ENCODE measurements at regions of chr12 and their contacts with region 1.

Region 1: GRCh38 chr12:121399391-121400331 is at the start of gene RNF34:
- DNase-seq: peak; percentile 99
- H3K4me3 ChIP-seq: peak within 1 kb of the TSS; percentile 93
- H3K27ac ChIP-seq: peak within 1 kb of the TSS; percentile 84
- H3K4me1 ChIP-seq: peaks cover 22% of the 10 kb centered on the region
- CTCF ChIP-seq: no peak
- total RNA-seq, gene RNF34: 145 and 173 TPM in 2 replicates

Region 2: DNA sequence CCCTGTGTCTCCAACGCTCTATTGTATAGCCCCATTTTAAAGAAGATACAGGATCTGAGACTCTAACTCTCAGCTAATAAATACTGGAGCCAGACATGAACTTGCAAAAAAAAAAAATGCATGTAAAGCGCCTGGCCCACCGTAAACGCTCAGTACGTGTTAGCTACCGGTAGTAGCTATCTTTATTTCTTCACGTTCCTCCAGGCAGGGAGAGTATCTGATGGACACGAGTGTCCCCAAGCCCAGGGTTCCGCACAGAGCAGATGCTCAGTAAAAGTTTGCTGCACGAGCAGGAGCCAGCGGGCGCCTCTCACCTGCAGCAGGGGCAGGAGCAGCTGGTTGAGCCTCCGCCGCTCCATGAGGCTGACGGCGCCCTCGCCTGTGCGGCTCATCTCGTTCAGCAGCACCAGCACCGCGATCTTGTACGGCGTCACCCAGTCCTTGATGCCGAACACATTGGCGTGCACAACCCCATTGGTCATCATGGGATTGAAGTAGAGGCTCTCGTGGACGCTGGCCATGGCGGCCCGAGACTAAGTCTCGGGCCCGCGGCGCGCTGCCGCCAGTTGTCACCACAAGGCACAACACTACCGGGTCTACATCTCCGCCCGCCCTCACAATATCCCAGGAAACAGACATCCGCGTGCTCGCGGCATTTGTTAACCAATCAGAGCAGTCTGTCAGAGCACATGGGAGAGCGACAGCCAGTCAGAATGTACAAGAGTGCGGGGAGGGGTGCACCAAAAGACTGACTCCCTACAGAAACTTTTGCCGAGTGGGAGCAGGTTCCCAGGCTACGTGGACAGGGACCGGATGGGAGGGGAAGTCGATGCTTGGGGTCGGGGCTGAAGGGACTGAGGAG is 47.6 kb before region 1 on chr12 and contains the start of gene ANAPC5:
- CTCF ChIA-PET with region 1: interaction called, 5 read pairs
- POLR2A ChIA-PET with region 1: interaction called, 12 read pairs
- intact Hi-C with region 1: loop called (anchors 1 kb)
- DNase-seq: peak; percentile 98
- H3K4me3 ChIP-seq: peak within 1 kb of the TSS; percentile 80
- H3K27ac ChIP-seq: peak within 1 kb of the TSS; percentile 58
- H3K4me1 ChIP-seq: peaks cover 22% of the 10 kb centered on the region
- CTCF ChIP-seq: peak; percentile 22; the same call in 1 of the 2 replicates
- total RNA-seq, gene ANAPC5: 191 and 217 TPM in 2 replicates

Region 3: DNA sequence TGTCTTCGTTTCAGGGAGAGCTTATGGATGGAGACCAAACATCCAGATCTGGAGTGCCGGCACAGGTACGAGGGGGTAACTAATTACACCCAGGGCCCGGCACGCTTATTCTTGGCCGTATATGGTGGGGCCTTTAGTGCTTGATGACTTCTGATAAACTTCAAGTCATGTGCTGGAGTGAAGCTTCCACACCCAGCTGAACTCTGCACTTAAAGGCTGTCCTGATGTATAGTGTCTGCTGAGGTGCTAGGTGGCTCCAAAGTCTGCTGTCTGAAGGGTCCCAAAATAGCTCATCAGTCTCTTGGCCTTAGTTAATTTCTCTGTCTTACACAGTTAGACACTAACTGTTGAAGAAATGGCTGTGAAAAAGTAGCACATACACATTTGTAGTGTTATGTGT is 18.2 kb after region 1 on chr12:
- CTCF ChIA-PET with region 1: no interaction called
- POLR2A ChIA-PET with region 1: interaction called, 37 read pairs
- intact Hi-C with region 1: no loop called
- DNase-seq: no peak
- H3K4me3 ChIP-seq: no peak overlapping the region
- H3K27ac ChIP-seq: no peak overlapping the region
- H3K4me1 ChIP-seq: no peaks in the 10 kb centered on the region
- CTCF ChIP-seq: no peak

Region 4: DNA sequence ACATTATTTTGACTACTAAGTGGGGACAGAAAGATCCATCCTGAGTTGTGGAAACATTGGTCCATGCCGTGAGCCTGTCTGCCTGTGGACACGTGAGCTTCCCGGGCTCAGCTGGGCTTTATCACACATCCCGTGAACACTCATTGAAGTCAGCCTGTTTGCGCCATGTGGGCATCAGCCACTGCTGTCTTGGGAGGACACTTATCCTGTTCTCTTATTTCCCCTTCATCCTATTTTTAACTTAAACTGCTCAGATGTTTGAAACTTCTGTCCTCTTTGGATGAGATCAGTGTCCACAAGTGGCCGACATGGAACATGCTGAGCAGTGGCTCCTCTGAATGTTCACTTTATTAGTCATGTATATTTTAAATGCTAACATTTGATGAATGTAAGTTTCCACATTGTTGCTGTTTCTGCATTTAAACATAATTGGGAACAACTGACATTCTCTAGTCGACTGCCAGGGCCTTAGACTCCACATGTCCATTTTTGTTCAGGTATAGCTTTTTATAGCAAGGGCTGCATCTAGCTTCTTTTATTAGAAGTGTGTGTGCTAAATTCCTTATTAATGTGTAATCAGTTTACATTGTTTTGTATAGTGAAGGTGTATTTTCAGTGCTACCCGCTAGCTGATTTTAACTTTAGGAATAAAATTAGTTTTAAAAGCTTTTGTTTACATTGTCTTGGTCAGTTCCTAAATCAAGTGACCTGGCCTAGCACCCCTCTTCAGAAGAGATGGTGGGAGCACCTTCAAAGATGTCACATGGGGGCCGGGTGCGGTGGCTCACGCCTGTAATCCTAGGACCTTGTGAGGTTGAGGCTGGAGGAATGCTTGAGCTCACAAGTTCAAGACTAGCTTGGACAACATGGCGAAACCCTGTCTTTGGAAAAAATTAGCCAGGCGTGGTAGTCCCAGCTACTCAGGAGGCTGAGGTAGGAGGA is 24.3 kb after region 1 on chr12:
- CTCF ChIA-PET with region 1: no interaction called
- POLR2A ChIA-PET with region 1: interaction called, 37 read pairs
- intact Hi-C with region 1: loop called (anchors 1 kb)
- DNase-seq: no peak
- H3K4me3 ChIP-seq: no peak overlapping the region
- H3K27ac ChIP-seq: peak overlapping the region; percentile 94
- H3K4me1 ChIP-seq: peaks cover 35% of the 10 kb centered on the region
- CTCF ChIP-seq: no peak

Region 5: GRCh38 chr12:121467115-121467793 is 67.6 kb after region 1 on chr12:
- CTCF ChIA-PET with region 1: no interaction called
- POLR2A ChIA-PET with region 1: interaction called, 3 read pairs
- intact Hi-C with region 1: loop called (anchors 1 kb)
- DNase-seq: peak; percentile 94
- H3K4me3 ChIP-seq: peak overlapping the region; percentile 74
- H3K27ac ChIP-seq: peak overlapping the region; percentile 68
- H3K4me1 ChIP-seq: peaks cover 28% of the 10 kb centered on the region
- CTCF ChIP-seq: no peak

Measured in OCI-LY7 (cell line).